ENCODE measurements at regions of chr1 and their contacts with region 1.

Region 1: DNA sequence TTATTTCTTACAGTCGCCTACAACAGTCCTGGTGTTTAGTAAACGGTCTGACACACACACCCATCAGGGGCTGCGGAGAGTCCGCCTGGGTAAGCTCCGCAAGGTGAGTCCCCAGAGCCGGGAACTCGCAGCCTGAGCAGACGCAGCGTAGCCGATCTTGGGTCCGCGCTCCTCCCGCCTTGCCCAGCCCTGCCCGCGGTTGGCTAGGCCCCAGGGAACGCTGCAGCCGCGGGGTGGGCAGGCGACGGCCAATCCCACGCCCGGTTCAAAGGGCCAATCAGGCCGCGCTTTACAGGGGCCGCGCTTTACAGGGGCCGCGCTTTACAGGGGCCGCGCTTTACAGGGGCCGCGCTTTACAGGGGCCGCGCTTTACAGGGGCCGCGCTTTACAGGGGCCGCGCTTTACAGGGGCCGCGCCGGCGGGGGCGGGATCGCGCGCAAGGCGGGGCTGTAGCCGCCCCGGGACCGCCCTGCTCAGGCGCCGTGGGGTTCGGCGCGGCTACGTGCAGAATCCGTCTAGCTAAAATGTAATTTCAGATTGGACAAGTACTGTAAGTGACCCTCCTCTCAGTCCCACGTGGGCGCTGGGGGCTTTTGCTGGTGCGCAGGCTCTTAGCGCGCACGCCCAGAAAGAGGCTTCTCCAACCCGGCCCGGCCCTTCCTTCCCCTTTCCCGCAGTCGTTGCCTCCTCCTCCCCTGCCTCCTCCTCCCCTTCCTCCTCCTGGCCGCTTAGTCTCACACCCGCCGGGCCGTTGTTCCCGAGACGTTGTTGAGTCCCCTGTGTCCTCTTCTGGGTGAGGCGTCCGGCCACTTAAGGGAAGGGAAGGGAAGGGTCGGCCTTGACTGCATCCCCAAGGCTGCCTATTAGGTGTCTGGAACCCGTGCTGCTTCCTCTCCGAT is at the start of gene FGGY:
- DNase-seq: peak; percentile 87 to 93
- ATAC-seq: peak; percentile 85 to 95 (median 89)
- H3K4me3 ChIP-seq: peak within 1 kb of the TSS; percentile 69
- H3K4me3 Mint-ChIP-seq: peak within 1 kb of the TSS; percentile 88
- H3K27ac ChIP-seq: peak within 1 kb of the TSS; percentile 96
- H3K27ac Mint-ChIP-seq: peak within 1 kb of the TSS; percentile 94 to 95
- H3K4me1 ChIP-seq: peaks cover 43% of the 10 kb centered on the region
- H3K4me1 Mint-ChIP-seq: peaks cover 48 to 50% of the 10 kb centered on the region in 2 donors
- H3K27me3 ChIP-seq: no peaks in the 10 kb centered on the region
- H3K27me3 Mint-ChIP-seq: no peaks in the 10 kb centered on the region
- CTCF ChIP-seq: no peak
- total RNA-seq, gene FGGY: 21.8 to 31.5 (median 21.8) TPM

Region 2: GRCh38 chr1:58755468-58755872 is 541.1 kb before region 1 on chr1:
- intact Hi-C with region 1: loop called (anchors 10 kb)
- DNase-seq: peak; percentile 57 to 73
- ATAC-seq: peak; percentile 84 to 88 (median 84)
- H3K4me3 ChIP-seq: no peak overlapping the region
- H3K4me3 Mint-ChIP-seq: peak overlapping the region; percentile 85
- H3K27ac ChIP-seq: peak overlapping the region; percentile 56
- H3K27ac Mint-ChIP-seq: peak overlapping the region; percentile 89 to 92
- H3K4me1 ChIP-seq: peaks cover 45% of the 10 kb centered on the region
- H3K4me1 Mint-ChIP-seq: peaks cover 82 to 87% of the 10 kb centered on the region in 2 donors
- H3K27me3 ChIP-seq: no peaks in the 10 kb centered on the region
- H3K27me3 Mint-ChIP-seq: no peaks in the 10 kb centered on the region
- CTCF ChIP-seq: no peak

Region 3: GRCh38 chr1:58903514-58904298 is 392.9 kb before region 1 on chr1:
- intact Hi-C with region 1: loop called (anchors 5 kb)
- DNase-seq: peak; percentile 58 to 79
- ATAC-seq: peak; percentile 81 to 86 (median 84)
- H3K4me3 ChIP-seq: peak overlapping the region; percentile 44
- H3K4me3 Mint-ChIP-seq: peak overlapping the region; percentile 90
- H3K27ac ChIP-seq: peak overlapping the region; percentile 77
- H3K27ac Mint-ChIP-seq: peak overlapping the region; percentile 79 to 91
- H3K4me1 ChIP-seq: peaks cover 12% of the 10 kb centered on the region
- H3K4me1 Mint-ChIP-seq: peaks cover 9 to 20% of the 10 kb centered on the region in 2 donors
- H3K27me3 ChIP-seq: no peaks in the 10 kb centered on the region
- H3K27me3 Mint-ChIP-seq: no peaks in the 10 kb centered on the region
- CTCF ChIP-seq: no peak

Region 4: DNA sequence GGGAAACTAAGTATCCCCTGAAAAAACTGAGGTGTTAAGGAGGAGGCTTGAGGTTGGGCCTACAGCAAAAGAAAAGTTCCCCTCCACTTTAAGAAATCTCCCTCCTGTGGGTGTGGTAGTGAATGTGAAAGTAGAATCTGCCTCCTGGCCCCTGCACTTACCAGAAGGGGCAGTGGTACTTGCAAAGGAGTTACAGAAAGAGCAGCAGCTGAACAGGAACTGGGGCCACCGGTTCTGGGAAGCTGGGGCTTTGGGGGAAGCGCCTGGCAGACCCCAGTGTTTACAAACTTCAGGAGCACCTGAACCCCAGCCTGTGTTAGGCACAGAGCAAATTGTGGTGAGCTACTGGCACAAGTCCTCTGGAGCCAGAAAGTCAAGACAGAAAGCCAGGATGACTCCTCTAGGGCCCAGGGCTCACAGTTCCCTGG is 249.9 kb before region 1 on chr1:
- intact Hi-C with region 1: loop called (anchors 10 kb)
- DNase-seq: peak in 1 of 2 donors; percentile 73
- ATAC-seq: peak; percentile 81 to 89 (median 85)
- H3K4me3 ChIP-seq: no peak overlapping the region
- H3K4me3 Mint-ChIP-seq: peak overlapping the region; percentile 51
- H3K27ac ChIP-seq: peak overlapping the region; percentile 71
- H3K27ac Mint-ChIP-seq: peak overlapping the region; percentile 80 to 84
- H3K4me1 ChIP-seq: peaks cover 42% of the 10 kb centered on the region
- H3K4me1 Mint-ChIP-seq: peaks cover 37 to 40% of the 10 kb centered on the region in 2 donors
- H3K27me3 ChIP-seq: no peaks in the 10 kb centered on the region
- H3K27me3 Mint-ChIP-seq: peaks cover 0 to 4% of the 10 kb centered on the region in 2 donors
- CTCF ChIP-seq: peak; percentile 25

Region 5: GRCh38 chr1:59316497-59317128 is 20.0 kb after region 1 on chr1:
- intact Hi-C with region 1: loop called (anchors 2 kb)
- DNase-seq: peak in 1 of 2 donors; percentile 42
- ATAC-seq: peak; percentile 84 to 92 (median 85)
- H3K4me3 ChIP-seq: peak overlapping the region; percentile 16
- H3K4me3 Mint-ChIP-seq: peak overlapping the region; percentile 87
- H3K27ac ChIP-seq: peak overlapping the region; percentile 11
- H3K27ac Mint-ChIP-seq: peak overlapping the region; percentile 77 to 93
- H3K4me1 ChIP-seq: peaks cover 29% of the 10 kb centered on the region
- H3K4me1 Mint-ChIP-seq: peaks cover 65 to 70% of the 10 kb centered on the region in 2 donors
- H3K27me3 ChIP-seq: no peaks in the 10 kb centered on the region
- H3K27me3 Mint-ChIP-seq: peaks cover 4 to 7% of the 10 kb centered on the region in 2 donors
- CTCF ChIP-seq: no peak

Measured in natural killer cell (primary cell).